Activated CD8-positive, alpha-beta T cell treated with anti-CD3 and anti-CD28 coated beads for 36 hours (primary cell): ENCODE measurements at regions of chr7 and their contacts with region 1.

Region 1: GRCh38 chr7:99525713-99526440 is 21.4 kb downstream of the ZKSCAN5 start:
- DNase-seq: peak; percentile 53
- ATAC-seq: peak; percentile 47
- H3K4me3 Mint-ChIP-seq: no peak overlapping the region
- H3K27ac Mint-ChIP-seq: no peak overlapping the region
- H3K4me1 Mint-ChIP-seq: no peaks in the 10 kb centered on the region
- H3K27me3 Mint-ChIP-seq: no peaks in the 10 kb centered on the region
- CTCF ChIP-seq: peak; percentile 41

Region 2: GRCh38 chr7:99409192-99409572 is 116.7 kb before region 1 on chr7:
- CTCF ChIA-PET with region 1: no interaction called
- POLR2A ChIA-PET with region 1: no interaction called
- intact Hi-C with region 1: no loop called
- DNase-seq: no peak
- ATAC-seq: peak; percentile 7
- H3K4me3 Mint-ChIP-seq: peak overlapping the region; percentile 90
- H3K27ac Mint-ChIP-seq: peak overlapping the region; percentile 97
- H3K4me1 Mint-ChIP-seq: peaks cover 38% of the 10 kb centered on the region
- H3K27me3 Mint-ChIP-seq: no peaks in the 10 kb centered on the region
- CTCF ChIP-seq: no peak

Region 3: GRCh38 chr7:99514050-99514449 is 11.8 kb before region 1 on chr7:
- CTCF ChIA-PET with region 1: interaction called, 12 read pairs
- POLR2A ChIA-PET with region 1: interaction called, 3 read pairs
- intact Hi-C with region 1: no loop called
- DNase-seq: no peak
- ATAC-seq: no peak
- H3K4me3 Mint-ChIP-seq: no peak overlapping the region
- H3K27ac Mint-ChIP-seq: no peak overlapping the region
- H3K4me1 Mint-ChIP-seq: peaks cover 11% of the 10 kb centered on the region
- H3K27me3 Mint-ChIP-seq: no peaks in the 10 kb centered on the region
- CTCF ChIP-seq: no peak

Region 4: DNA sequence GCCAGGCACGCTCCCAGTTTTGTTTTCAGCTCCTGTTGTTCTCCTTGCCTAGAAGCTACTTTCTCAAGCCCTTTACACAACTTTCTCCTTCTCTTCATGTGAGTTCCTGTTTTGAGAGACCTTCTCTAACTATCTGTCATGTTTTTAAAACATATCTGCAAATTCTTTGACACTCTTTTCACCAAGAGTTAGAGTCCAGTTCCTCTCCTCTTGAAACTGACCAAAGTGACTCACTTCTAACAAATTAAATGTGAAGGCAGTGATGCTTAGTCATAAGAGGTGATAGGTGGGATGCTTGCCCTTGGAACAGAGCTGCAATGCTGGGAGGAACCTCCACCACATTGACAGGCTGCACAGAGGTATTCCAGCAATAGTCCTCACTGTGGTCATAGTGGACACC is 116.2 kb after region 1 on chr7:
- CTCF ChIA-PET with region 1: no interaction called
- POLR2A ChIA-PET with region 1: no interaction called
- intact Hi-C with region 1: no loop called
- DNase-seq: no peak
- ATAC-seq: peak; percentile 40
- H3K4me3 Mint-ChIP-seq: no peak overlapping the region
- H3K27ac Mint-ChIP-seq: peak overlapping the region; percentile 66
- H3K4me1 Mint-ChIP-seq: peaks cover 62% of the 10 kb centered on the region
- H3K27me3 Mint-ChIP-seq: no peaks in the 10 kb centered on the region
- CTCF ChIP-seq: no peak